ENCODE measurements at regions of chr9 and their contacts with region 1.

Region 1: GRCh38 chr9:35756275-35757225 is 2.5 kb upstream of the MSMP start:
- DNase-seq: peak; percentile 90
- ATAC-seq: peak; percentile 87
- H3K4me3 Mint-ChIP-seq: peak overlapping the region; percentile 96
- H3K27ac Mint-ChIP-seq: peak overlapping the region; percentile 92
- H3K4me1 Mint-ChIP-seq: peaks cover 33% of the 10 kb centered on the region
- H3K27me3 Mint-ChIP-seq: no peaks in the 10 kb centered on the region

Region 2: GRCh38 chr9:35774907-35775635 is 18.5 kb after region 1 on chr9:
- CTCF ChIA-PET with region 1: interaction called, 11 read pairs
- DNase-seq: no peak
- ATAC-seq: no peak
- H3K4me3 Mint-ChIP-seq: no peak overlapping the region
- H3K27ac Mint-ChIP-seq: peak overlapping the region; percentile 41
- H3K4me1 Mint-ChIP-seq: peaks cover 2% of the 10 kb centered on the region
- H3K27me3 Mint-ChIP-seq: no peaks in the 10 kb centered on the region